ENCODE measurements at regions of chr1 and their contacts with region 1.

Region 1: GRCh38 chr1:167442124-167442848 is 76.0 kb downstream of the CD247 start:
- DNase-seq: peak; percentile 75
- ATAC-seq: peak; percentile 92
- H3K4me3 Mint-ChIP-seq: no peak overlapping the region
- H3K27ac Mint-ChIP-seq: no peak overlapping the region
- H3K4me1 Mint-ChIP-seq: peaks cover 35% of the 10 kb centered on the region
- H3K27me3 Mint-ChIP-seq: no peaks in the 10 kb centered on the region
- CTCF ChIP-seq: no peak

Region 2: GRCh38 chr1:167066333-167067122 is 375.8 kb before region 1 on chr1:
- CTCF ChIA-PET with region 1: interaction called, 6 read pairs
- POLR2A ChIA-PET with region 1: no interaction called
- intact Hi-C with region 1: loop called (anchors 1 kb)
- DNase-seq: peak; percentile 76
- ATAC-seq: peak; percentile 94
- H3K4me3 Mint-ChIP-seq: no peak overlapping the region
- H3K27ac Mint-ChIP-seq: no peak overlapping the region
- H3K4me1 Mint-ChIP-seq: no peaks in the 10 kb centered on the region
- H3K27me3 Mint-ChIP-seq: no peaks in the 10 kb centered on the region
- CTCF ChIP-seq: peak; percentile 70

Region 3: DNA sequence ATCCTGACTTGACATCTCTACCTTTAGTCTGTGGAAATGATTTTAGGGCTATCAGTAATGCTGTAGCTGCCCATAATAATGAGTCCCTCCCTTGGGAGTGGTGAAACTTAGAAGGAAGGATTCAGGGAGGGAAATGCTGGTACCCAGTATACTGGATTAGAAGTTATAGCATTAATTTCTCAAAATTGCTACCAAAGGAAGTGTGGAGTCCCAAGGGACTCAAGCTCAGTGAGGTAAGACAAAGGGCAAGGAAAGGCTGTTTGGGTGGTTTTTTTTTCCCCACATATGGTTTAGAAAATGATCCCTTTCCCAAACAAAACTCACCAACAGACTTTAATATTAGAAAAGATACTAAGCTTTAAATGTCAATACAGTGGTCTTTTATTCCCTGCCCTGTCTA is 23.9 kb before region 1 on chr1:
- CTCF ChIA-PET with region 1: interaction called, 4 read pairs
- POLR2A ChIA-PET with region 1: interaction called, 3 read pairs
- intact Hi-C with region 1: loop called (anchors 2 kb)
- DNase-seq: no peak
- ATAC-seq: peak; percentile 42
- H3K4me3 Mint-ChIP-seq: peak overlapping the region; percentile 4
- H3K27ac Mint-ChIP-seq: no peak overlapping the region
- H3K4me1 Mint-ChIP-seq: peaks cover 21% of the 10 kb centered on the region
- H3K27me3 Mint-ChIP-seq: no peaks in the 10 kb centered on the region
- CTCF ChIP-seq: no peak

Region 4: DNA sequence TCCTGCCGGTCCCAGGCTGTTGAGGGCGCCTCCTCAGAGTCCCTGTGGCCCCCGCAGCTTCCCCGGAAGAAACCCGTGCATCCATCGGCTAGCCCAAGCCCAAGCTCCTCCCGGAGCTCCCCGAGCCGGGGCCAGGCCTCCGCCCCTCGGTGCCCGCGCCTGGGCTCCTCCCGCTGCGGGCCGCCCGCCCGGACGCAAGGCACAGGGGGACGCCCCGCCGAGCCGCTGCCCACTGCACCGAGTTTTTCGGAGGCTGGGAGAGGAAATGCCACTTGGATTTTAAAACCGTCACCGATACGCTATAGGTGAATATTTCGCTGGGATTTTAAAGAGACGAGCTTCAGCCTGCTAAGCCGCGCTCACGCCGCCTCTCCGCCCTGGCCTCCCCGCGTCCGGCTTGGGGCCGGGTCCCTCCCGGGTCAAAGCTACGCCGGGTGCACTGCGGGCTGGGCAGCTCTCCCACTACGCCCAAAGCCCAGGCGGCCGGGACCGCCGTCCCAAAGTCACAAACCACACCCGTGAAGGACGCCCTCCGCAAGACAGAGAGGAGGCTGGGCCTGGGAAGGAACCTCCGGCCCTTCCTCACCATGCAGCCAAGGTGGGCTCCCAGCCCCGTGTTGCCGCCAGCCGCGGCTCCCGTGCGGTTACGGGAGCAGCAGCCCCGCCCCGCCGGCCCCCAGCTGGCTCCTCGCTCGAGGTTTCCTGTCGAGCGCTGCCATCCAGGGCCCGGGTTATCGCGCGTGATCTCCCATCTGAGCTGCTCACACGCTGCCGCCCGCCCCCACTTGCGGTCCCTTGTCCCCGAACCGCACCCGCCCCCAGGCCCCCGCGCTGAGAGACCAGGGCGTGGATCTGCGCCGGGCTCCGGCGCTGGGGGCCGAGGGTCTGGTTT is 12.9 kb after region 1 on chr1:
- CTCF ChIA-PET with region 1: interaction called, 10 read pairs
- POLR2A ChIA-PET with region 1: interaction called, 6 read pairs
- intact Hi-C with region 1: no loop called
- DNase-seq: peak; percentile 60
- ATAC-seq: peak; percentile 76
- H3K4me3 Mint-ChIP-seq: peak overlapping the region; percentile 78
- H3K27ac Mint-ChIP-seq: no peak overlapping the region
- H3K4me1 Mint-ChIP-seq: peaks cover 18% of the 10 kb centered on the region
- H3K27me3 Mint-ChIP-seq: peaks cover 4% of the 10 kb centered on the region
- CTCF ChIP-seq: no peak

Region 5: GRCh38 chr1:167553136-167554027 is 111.1 kb after region 1 on chr1 and contains the start of gene CREG1:
- CTCF ChIA-PET with region 1: interaction called, 3 read pairs
- POLR2A ChIA-PET with region 1: no interaction called
- intact Hi-C with region 1: loop called (anchors 1 kb)
- DNase-seq: peak; percentile 84
- ATAC-seq: peak; percentile 99
- H3K4me3 Mint-ChIP-seq: peak within 1 kb of the TSS; percentile 86
- H3K27ac Mint-ChIP-seq: peak within 1 kb of the TSS; percentile 41
- H3K4me1 Mint-ChIP-seq: peaks cover 19% of the 10 kb centered on the region
- H3K27me3 Mint-ChIP-seq: no peaks in the 10 kb centered on the region
- CTCF ChIP-seq: no peak
- total RNA-seq, gene CREG1: 3.1 and 3.8 TPM in 2 replicates

Measured in activated B cell treated with CpG ODN at 0.5 μM for 24 hours (primary cell).